ENCODE measurements at regions of chr11 and their contacts with region 1.

Region 1: DNA sequence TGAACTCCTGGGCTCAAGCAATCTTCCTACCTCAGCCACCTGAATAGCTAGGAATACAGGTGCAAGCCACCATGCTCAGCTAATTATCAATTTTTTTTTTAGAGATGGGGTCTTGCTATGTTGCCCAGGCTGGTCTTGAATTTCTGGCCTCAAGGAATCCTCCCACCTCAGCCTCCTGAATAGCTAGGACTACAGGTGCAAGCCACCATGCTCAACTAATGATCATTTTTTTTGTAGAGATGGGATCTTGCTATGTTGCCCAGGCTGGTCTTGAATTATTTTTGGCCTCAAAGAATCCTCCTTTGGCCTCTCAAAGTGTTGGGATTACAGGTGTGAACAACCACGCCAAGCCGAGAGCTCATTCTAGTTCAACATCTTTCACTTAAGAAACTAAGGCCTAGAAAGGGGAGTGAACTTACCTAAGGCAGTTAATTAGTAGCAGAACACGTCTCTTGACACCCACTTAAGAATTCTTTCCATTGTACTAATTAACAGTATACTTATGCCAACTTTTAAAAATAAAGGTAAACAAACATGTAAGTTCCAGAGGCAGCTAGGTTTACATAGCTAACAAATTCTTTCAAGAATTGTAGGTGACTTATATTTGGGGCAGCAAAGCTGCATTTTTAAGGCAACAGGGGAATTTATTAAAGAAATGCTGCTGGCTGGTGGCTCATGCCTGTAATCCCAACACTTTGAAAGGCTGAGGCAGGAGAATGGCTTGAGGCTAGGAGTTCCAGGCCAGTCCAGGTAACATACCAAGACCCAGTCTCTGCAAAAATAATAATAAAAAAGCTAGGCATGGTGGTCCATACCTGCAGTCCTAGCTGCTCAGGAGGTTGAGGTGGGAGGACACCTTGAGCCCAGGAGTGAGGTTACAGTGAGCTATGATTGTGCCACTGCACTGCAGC is 9.6 kb downstream of the ZBED5 start:
- DNase-seq: no peak
- ATAC-seq: no peak
- H3K4me3 ChIP-seq: no peak overlapping the region
- H3K27ac ChIP-seq: no peak overlapping the region
- H3K4me1 ChIP-seq: peaks cover 2% of the 10 kb centered on the region; the same call in 1 of the 2 replicates
- H3K27me3 ChIP-seq: no peaks in the 10 kb centered on the region
- CTCF ChIP-seq: no peak
- POLR2A ChIP-seq: no peak
- RAD21 ChIP-seq: no peak

Region 2: DNA sequence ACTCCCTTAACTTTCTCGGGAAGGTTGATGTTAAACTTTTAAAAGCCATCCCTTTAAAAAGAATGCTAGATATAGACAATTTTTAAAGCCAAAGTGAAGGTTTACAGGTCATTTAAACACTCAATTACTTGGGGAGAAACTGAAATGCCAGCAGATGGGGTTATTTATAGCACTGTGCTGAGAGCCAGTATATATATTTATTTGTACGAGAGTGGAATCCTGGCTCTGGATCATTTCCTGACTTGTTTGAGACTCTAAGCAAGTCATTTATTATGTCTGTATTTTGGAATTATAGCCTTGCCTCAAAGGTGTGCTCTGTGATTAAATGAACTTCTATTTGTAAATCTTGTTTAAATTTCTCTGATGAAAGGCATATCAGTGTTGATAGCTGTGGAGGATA is 16.5 kb after region 1 on chr11:
- CTCF ChIA-PET with region 1: interaction called, 6 read pairs
- POLR2A ChIA-PET with region 1: no interaction called
- dilution Hi-C with region 1: no loop called
- in situ Hi-C with region 1: no loop called
- intact Hi-C with region 1: loop called (anchors 1 kb)
- DNase-seq: peak; percentile 54
- ATAC-seq: peak; percentile 52
- H3K4me3 ChIP-seq: no peak overlapping the region
- H3K27ac ChIP-seq: no peak overlapping the region
- H3K4me1 ChIP-seq: 0 out of 2 replicates have a peak, but pooled peaks cover 3% of the 10 kb centered on the region
- H3K27me3 ChIP-seq: no peaks in the 10 kb centered on the region
- CTCF ChIP-seq: no peak
- POLR2A ChIP-seq: no peak
- RAD21 ChIP-seq: no peak